ENCODE measurements at regions of chr1 and their contacts with region 1.

Region 1: GRCh38 chr1:100229681-100230443 is 19.8 kb downstream of the DBT start:
- DNase-seq: no peak
- ATAC-seq: no peak
- H3K4me3 ChIP-seq: no peak overlapping the region
- H3K27ac ChIP-seq: no peak overlapping the region
- H3K4me1 ChIP-seq: no peaks in the 10 kb centered on the region
- H3K27me3 ChIP-seq: no peaks in the 10 kb centered on the region
- CTCF ChIP-seq: no peak
- POLR2A ChIP-seq: no peak
- RAD21 ChIP-seq: no peak

Region 2: DNA sequence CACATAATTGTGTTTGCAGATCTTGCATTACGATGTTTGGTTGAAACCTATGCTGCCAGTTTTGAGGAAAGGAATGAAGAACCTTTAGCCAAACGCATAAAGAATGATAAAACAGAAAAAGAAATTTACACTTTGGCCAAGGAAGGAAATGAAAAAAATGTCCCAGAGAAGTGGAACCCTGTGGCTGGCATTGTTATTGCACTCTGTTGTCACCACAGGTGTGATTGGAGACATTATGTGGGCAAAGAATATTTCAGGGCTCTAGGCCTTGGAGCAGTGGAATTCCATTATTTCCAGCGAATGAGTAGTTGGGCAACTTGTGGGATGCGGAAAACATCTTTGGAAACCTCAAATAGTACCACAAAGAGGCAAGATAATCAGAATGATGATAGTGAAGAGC is 82.0 kb before region 1 on chr1:
- CTCF ChIA-PET with region 1: no interaction called
- POLR2A ChIA-PET with region 1: no interaction called
- dilution Hi-C with region 1: no loop called
- in situ Hi-C with region 1: no loop called
- intact Hi-C with region 1: loop called (anchors 10 kb)
- DNase-seq: no peak
- ATAC-seq: no peak
- H3K4me3 ChIP-seq: no peak overlapping the region
- H3K27ac ChIP-seq: no peak overlapping the region
- H3K4me1 ChIP-seq: no peaks in the 10 kb centered on the region
- H3K27me3 ChIP-seq: no peaks in the 10 kb centered on the region
- CTCF ChIP-seq: no peak
- POLR2A ChIP-seq: no peak
- RAD21 ChIP-seq: no peak

Region 3: GRCh38 chr1:100188617-100189016 is 41.2 kb before region 1 on chr1:
- CTCF ChIA-PET with region 1: no interaction called
- POLR2A ChIA-PET with region 1: interaction called, 18 read pairs
- dilution Hi-C with region 1: no loop called
- in situ Hi-C with region 1: no loop called
- intact Hi-C with region 1: no loop called
- DNase-seq: peak; percentile 73
- ATAC-seq: peak; percentile 68
- H3K4me3 ChIP-seq: no peak overlapping the region
- H3K27ac ChIP-seq: no peak overlapping the region
- H3K4me1 ChIP-seq: peaks cover 5% of the 10 kb centered on the region
- H3K27me3 ChIP-seq: no peaks in the 10 kb centered on the region
- CTCF ChIP-seq: no peak
- POLR2A ChIP-seq: no peak
- RAD21 ChIP-seq: no peak

Region 4: DNA sequence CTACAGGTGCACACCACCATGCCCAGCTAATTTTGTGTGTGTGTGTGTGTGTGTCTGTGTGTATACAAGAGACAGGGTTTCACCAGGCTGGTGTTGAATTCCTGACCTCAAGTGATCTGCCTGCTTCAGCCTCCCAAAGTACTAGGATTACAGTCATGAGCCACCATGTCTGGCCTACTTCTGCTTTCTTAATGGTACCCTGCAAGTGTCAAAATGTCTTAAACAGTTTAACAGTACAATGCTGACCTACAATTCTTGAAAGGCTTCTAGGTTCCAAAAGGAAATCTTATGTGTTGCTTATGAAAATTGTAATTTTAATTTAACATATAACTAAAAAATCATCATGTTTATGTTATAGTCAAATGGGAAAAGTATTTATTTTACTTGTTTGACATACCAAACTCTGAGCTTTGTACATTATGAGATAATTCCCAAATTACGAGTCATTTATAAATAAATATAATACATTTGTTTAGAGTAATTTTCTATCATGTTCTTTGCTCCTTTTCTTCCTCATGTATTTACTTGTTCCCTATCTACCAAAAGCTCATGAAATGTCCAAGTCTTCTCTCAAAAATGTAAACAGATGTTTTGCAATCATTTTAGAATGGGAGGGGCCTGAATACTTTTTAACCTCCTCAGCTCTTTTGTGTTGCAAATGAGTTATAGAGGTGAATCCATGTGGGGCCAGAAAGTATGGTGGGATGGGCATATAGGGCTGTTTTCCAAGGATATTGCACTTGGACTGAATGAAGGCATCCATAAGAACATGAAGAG is 481.2 kb after region 1 on chr1:
- CTCF ChIA-PET with region 1: no interaction called
- POLR2A ChIA-PET with region 1: no interaction called
- dilution Hi-C with region 1: no loop called
- in situ Hi-C with region 1: no loop called
- intact Hi-C with region 1: no loop called
- DNase-seq: peak; percentile 82
- ATAC-seq: peak; percentile 70
- H3K4me3 ChIP-seq: no peak overlapping the region
- H3K27ac ChIP-seq: peak overlapping the region; percentile 94
- H3K4me1 ChIP-seq: peaks cover 26% of the 10 kb centered on the region
- H3K27me3 ChIP-seq: no peaks in the 10 kb centered on the region
- CTCF ChIP-seq: no peak
- POLR2A ChIP-seq: no peak
- RAD21 ChIP-seq: no peak

Measured in IMR-90 (cell line).